ENCODE measurements at regions of chr12 and their contacts with region 1.

Region 1: GRCh38 chr12:12562585-12563261 is at the start of gene DUSP16:
- DNase-seq: peak; percentile 96 to 97
- ATAC-seq: peak; percentile 96
- H3K4me3 ChIP-seq: peak within 1 kb of the TSS; percentile 70 to 100
- H3K27ac ChIP-seq: peak within 1 kb of the TSS; percentile 99 to 100
- H3K4me1 ChIP-seq: peaks cover 1 to 3% of the 10 kb centered on the region in 2 donors
- H3K27me3 ChIP-seq: no peaks in the 10 kb centered on the region
- total RNA-seq, gene DUSP16: 22.0 to 27.4 TPM

Region 2: DNA sequence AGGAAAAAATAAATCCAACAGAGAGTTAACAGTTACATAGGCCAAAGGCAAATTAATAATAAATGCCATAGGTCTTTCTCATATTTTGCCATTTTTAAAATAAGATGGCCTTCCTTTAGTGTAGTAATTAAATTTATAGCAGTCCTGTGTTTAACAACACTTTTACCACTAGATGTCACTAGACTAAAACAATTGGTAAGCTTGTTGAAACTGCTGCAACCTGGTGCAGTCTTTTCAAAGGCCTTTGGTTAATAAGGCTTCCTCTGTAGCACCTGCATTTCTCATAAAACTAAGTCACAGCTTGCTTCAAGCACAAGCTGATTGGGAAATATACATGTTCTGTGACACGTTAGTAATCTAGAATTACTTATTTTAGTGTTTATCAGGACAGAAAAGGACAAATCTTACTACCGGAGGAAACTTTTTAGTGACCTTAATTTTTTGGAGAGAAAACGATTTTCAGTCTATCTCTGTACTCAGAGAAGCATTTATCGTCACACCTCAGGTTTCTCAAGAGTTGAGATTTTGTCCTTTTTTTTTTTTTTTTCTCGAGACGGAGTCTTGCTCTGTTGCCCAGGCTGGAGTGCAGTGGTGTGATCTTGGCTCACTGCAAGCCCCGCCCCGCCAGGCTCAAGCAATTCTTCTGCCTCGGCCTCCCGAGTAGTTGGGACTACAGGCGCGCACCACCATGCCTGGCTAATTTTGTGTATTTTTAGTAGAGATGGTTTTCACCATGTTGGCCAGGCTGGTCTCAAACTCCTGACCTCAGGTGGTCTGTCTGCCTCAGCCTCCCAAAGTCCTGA is 185.9 kb before region 1 on chr12:
- intact Hi-C with region 1: loop called (anchors 2 kb)
- DNase-seq: no peak
- ATAC-seq: peak; percentile 89
- H3K4me3 ChIP-seq: no peak overlapping the region
- H3K27ac ChIP-seq: no peak overlapping the region
- H3K4me1 ChIP-seq: peaks cover 0 to 1% of the 10 kb centered on the region in 2 donors
- H3K27me3 ChIP-seq: no peaks in the 10 kb centered on the region

Region 3: DNA sequence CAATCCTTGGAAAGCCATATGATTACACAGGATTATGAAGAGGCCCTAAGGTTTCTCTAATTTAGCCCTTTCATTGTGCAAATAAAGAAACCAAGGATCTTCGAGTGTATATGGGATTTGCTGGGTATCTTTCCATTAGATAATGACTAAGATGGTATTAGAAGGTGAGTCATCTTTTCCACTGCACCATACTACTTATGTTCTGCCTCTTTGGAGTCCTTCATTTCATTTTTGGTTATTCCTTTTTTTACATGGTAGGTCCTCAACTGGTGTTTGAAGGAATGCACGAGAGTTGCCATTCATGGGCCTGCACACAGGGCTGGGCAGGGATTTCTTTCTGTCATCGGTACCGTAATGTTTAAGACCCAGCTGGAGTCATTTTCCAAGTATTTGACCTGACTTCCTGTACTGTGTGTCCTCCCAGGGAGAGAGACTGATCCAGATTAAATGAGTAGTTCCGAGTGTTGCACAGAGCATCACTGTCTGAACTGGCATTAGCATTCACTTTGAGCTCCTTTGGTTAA is 120.1 kb before region 1 on chr12:
- intact Hi-C with region 1: loop called (anchors 5 kb)
- DNase-seq: no peak
- ATAC-seq: peak; percentile 57
- H3K4me3 ChIP-seq: no peak overlapping the region
- H3K27ac ChIP-seq: peak overlapping the region; percentile 80 to 96
- H3K4me1 ChIP-seq: no peaks in the 10 kb centered on the region
- H3K27me3 ChIP-seq: no peaks in the 10 kb centered on the region

Region 4: DNA sequence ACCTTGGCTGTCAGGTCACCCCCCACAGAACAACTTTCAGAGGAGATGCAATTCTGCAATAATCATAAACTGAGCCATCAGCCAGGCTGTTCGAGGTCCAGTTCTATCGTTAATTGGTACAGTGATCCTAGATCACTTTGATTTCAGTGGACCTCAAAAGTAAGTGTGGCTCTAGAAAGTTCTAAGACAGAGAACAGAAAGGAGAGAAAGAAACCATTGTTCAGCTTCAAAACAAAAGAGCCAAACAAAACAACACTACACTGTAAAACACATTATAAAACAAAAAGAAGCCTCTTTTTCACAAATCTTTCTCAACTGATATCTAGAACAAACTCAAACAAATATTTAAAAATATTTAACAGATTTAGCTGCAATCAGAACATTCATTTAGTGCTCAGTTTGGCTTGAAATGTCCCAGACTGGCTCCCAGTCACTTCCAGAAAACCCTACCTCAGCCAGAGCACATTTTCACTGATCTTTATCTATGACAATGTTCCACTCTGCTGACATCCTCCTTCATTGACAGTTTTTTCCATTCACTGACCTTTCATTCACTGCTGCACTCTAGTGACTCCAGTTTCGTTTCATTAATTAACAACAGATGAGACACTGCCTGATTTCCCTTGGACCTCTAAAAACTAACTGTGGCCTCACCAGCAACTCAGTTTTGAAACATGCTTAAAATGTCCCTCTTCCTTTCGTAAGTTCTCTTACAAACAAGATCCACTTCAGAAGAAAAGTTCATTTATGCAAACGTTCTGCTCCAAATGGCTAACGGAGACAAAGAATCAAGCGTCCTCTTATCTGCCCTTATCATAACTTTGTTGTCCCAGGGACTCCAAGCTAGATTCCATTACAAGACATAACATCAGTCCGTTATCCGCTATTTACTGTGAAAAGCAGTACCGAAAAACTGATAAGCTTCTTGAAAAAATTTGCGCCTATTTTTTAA is 56.9 kb before region 1 on chr12:
- intact Hi-C with region 1: loop called in 1 of 2 experiments (anchors 5 kb)
- DNase-seq: no peak
- ATAC-seq: peak; percentile 85
- H3K4me3 ChIP-seq: peak overlapping the region in 1 of 2 donors; percentile 69
- H3K27ac ChIP-seq: peak overlapping the region; percentile 39 to 43
- H3K4me1 ChIP-seq: peaks cover 1 to 5% of the 10 kb centered on the region in 2 donors
- H3K27me3 ChIP-seq: no peaks in the 10 kb centered on the region

Region 5: GRCh38 chr12:12654691-12655460 is 92.2 kb after region 1 on chr12:
- intact Hi-C with region 1: loop called in 1 of 2 experiments (anchors 10 kb)
- DNase-seq: no peak
- ATAC-seq: no peak
- H3K4me3 ChIP-seq: no peak overlapping the region
- H3K27ac ChIP-seq: no peak overlapping the region
- H3K4me1 ChIP-seq: no peaks in the 10 kb centered on the region
- H3K27me3 ChIP-seq: no peaks in the 10 kb centered on the region

Region 6: DNA sequence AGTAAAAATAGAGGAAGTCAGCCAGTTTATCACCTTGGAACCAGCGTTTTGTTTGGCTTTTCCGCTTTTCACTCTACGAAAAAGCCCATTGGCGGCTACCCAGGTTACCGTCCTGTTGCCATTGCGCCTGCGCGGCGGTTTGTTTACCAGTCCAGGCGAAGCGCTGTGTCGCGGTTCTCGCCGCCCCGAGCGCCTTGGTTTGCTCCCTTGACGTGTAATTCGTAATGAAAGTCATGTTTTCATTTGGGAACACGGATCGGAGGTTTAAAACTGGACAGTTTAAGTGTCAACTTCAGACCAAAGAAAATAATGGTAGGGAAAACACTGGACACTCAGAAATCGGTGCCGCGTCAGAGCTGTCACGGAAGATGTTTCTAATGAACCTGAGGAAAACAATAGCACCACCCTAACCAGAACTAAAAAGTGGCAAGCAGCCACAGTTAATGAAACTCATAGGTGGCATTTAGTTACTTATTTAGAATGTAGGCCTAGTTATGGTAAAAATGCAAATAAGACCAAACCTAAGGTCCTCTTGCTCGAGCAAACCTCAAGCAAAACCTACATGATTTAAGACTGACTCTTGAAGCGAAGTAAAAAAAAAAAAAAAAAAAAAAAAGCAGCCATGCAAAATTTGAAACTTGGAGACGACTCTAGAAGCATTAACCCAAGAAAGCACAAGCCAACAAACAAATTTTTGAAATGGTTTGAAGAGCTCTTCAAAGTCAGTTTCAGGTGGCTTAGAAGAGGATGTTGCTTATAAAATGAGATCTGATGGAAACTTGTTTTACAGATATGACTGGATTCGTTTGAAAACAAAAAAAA is 134.1 kb after region 1 on chr12:
- intact Hi-C with region 1: loop called (anchors 5 to 10 kb)
- DNase-seq: peak; percentile 96
- ATAC-seq: peak; percentile 95
- H3K4me3 ChIP-seq: peak overlapping the region; percentile 57 to 96
- H3K27ac ChIP-seq: peak overlapping the region; percentile 62 to 69
- H3K4me1 ChIP-seq: no peaks in the 10 kb centered on the region
- H3K27me3 ChIP-seq: no peaks in the 10 kb centered on the region

Region 7: DNA sequence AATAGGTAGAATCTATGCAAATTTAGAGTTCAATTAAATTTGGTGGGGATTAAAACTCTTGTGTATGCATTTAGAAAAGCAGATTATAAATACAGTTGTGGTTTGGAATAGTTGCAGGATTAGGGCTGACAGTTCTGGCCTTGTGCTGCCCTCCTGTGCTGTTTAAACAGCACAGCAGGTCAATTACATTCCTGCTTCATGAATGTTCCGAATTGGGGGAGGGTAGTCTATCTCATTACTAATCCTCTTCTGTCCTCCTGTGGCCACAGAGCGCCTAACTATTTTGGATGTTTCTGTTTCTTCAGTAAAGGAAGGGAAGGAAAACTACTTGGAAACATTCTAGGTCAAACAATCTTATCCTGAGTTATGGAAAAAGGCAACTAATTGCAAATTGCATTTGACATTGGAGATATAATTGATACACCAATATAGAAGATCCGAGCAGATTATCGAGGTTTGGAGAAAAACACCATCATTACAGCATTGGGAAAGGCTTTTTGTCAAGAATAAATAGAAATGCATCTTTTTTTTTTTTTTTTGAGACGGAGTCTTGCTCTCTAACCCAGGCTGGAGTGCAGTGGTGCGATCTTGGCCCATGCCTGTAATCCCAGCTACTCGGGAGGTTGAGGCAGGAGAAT is 142.0 kb after region 1 on chr12:
- intact Hi-C with region 1: loop called (anchors 5 to 10 kb)
- DNase-seq: peak in 1 of 2 donors; percentile 64
- ATAC-seq: peak; percentile 96
- H3K4me3 ChIP-seq: no peak overlapping the region
- H3K27ac ChIP-seq: no peak overlapping the region
- H3K4me1 ChIP-seq: no peaks in the 10 kb centered on the region
- H3K27me3 ChIP-seq: no peaks in the 10 kb centered on the region

Measured in aorta (tissue), 5 donors.